ENCODE measurements at regions of chr4 and their contacts with region 1.

Region 1: DNA sequence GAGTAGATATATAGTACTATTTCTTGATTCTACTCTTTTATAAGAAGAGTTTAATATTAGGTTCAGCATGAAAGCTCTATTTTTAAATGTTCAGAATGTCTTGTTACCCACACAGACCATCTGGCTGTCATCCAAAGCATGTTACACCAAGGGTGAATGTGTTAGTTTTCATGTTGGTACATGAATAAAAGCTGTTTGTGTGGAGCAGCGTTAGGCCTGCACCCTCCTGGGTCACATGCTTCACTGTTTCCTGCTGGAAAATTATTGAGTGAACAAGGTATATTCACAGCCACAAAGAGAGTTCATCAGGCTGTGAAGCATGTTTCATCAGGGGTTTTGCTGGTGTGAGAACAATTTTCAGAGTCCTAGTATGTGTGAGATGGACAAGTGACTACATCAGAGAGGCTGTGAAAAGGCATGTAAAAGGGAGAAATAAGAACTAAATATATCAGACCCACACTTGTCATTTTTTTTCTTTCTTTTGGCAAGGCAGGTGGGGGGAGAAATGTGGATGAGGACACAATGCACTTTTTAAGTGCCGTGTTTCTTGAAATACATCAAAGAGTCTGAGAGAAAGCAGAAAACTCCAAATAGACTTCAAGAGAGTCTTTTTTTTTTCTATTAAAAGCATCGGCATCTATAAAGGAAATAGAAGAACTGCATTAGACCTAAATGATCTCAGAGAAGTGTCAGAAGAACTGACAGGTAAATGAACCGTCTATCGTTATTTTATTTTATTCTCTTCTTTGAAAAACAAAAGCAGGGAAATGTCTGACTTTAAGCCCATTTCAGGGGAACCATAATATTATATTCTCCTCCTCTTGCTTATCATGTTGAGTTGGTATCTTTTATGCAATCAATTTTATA is 2429.7 kb downstream of the PCDH7 start:
- DNase-seq: no peak
- ATAC-seq: no peak

Region 2: DNA sequence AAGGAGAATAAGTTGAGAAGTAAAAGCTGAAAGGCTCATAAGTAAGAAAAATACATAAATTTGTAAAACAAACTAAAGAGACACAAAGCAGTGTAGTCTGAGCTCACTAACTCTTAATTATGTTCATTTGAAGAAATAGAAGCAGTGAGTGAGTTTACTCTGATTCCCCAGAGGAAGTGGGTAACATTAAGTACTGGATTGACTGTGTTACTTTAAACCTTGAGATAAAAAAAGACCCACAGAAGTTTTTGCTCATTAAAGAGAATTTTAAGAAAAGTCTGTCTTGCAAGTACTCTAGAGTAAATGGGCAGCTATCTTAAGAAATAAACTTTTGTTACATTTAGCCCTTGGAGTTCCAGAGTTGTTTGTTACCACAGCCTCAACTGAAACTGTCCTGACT is 37.1 kb after region 1 on chr4:
- intact Hi-C with region 1: no loop called
- DNase-seq: no peak
- ATAC-seq: no peak

Region 3: DNA sequence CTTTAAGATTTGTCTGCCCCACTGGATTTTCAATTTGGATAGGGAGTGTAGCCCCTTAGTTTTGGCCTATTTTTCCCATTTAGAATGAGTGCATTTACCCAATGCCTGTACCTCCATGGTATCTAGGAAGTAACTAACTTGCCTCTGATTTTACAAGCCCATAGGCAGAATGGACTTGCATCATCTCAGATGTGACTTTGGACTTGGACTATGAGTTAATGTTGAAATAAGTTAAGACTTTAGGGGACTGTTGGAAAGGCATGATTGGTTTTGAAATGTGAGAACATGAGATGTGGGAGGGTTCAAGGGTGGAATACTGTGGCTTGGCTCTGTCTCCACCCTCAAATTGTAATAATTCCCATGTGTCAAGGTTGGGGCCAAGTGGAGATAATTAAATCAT is 50.5 kb after region 1 on chr4:
- intact Hi-C with region 1: loop called (anchors 5 kb)
- DNase-seq: no peak
- ATAC-seq: no peak